ENCODE measurements at regions of chr15 and their contacts with region 1.

Region 1: GRCh38 chr15:75453703-75454470 is 2.4 kb upstream of the SIN3A start:
- DNase-seq: peak; percentile 100
- H3K4me3 Mint-ChIP-seq: peak overlapping the region; percentile 89
- H3K27ac Mint-ChIP-seq: peak overlapping the region; percentile 85
- H3K4me1 Mint-ChIP-seq: peaks cover 22% of the 10 kb centered on the region
- H3K27me3 Mint-ChIP-seq: no peaks in the 10 kb centered on the region
- CTCF ChIP-seq: no peak

Region 2: GRCh38 chr15:74842581-74843444 is 611.1 kb before region 1 on chr15 and contains the start of gene ULK3:
- CTCF ChIA-PET with region 1: no interaction called
- POLR2A ChIA-PET with region 1: no interaction called
- intact Hi-C with region 1: no loop called
- DNase-seq: peak; percentile 89
- H3K4me3 Mint-ChIP-seq: peak within 1 kb of the TSS; percentile 83
- H3K27ac Mint-ChIP-seq: peak within 1 kb of the TSS; percentile 49
- H3K4me1 Mint-ChIP-seq: no peaks in the 10 kb centered on the region
- H3K27me3 Mint-ChIP-seq: no peaks in the 10 kb centered on the region
- CTCF ChIP-seq: peak; percentile 76
- total RNA-seq, gene ULK3: 27.6 and 31.3 TPM in 2 replicates

Region 3: GRCh38 chr15:75468913-75469598 is 15.2 kb after region 1 on chr15:
- CTCF ChIA-PET with region 1: no interaction called
- POLR2A ChIA-PET with region 1: interaction called, 34 read pairs
- intact Hi-C with region 1: no loop called
- DNase-seq: peak; percentile 3
- H3K4me3 Mint-ChIP-seq: no peak overlapping the region
- H3K27ac Mint-ChIP-seq: no peak overlapping the region
- H3K4me1 Mint-ChIP-seq: peaks cover 6% of the 10 kb centered on the region
- H3K27me3 Mint-ChIP-seq: no peaks in the 10 kb centered on the region
- CTCF ChIP-seq: no peak

Region 4: GRCh38 chr15:75578948-75579920 is 125.3 kb after region 1 on chr15 and contains the start of gene PTPN9:
- CTCF ChIA-PET with region 1: interaction called, 4 read pairs
- POLR2A ChIA-PET with region 1: interaction called, 92 read pairs
- intact Hi-C with region 1: loop called (anchors 5 kb)
- DNase-seq: peak; percentile 74
- H3K4me3 Mint-ChIP-seq: peak within 1 kb of the TSS; percentile 95
- H3K27ac Mint-ChIP-seq: peak within 1 kb of the TSS; percentile 97
- H3K4me1 Mint-ChIP-seq: peaks cover 9% of the 10 kb centered on the region
- H3K27me3 Mint-ChIP-seq: no peaks in the 10 kb centered on the region
- CTCF ChIP-seq: peak; percentile 54
- total RNA-seq, gene PTPN9: 31.6 and 33.0 TPM in 2 replicates

Region 5: GRCh38 chr15:75647370-75648155 is 193.7 kb after region 1 on chr15 and contains the start of gene SNX33:
- CTCF ChIA-PET with region 1: interaction called, 3 read pairs
- POLR2A ChIA-PET with region 1: interaction called, 79 read pairs
- intact Hi-C with region 1: no loop called
- DNase-seq: peak; percentile 77
- H3K4me3 Mint-ChIP-seq: peak within 1 kb of the TSS; percentile 87
- H3K27ac Mint-ChIP-seq: peak within 1 kb of the TSS; percentile 78
- H3K4me1 Mint-ChIP-seq: peaks cover 47% of the 10 kb centered on the region
- H3K27me3 Mint-ChIP-seq: no peaks in the 10 kb centered on the region
- CTCF ChIP-seq: peak; percentile 48
- total RNA-seq, gene SNX33: 14.3 and 15.2 TPM in 2 replicates

Region 6: DNA sequence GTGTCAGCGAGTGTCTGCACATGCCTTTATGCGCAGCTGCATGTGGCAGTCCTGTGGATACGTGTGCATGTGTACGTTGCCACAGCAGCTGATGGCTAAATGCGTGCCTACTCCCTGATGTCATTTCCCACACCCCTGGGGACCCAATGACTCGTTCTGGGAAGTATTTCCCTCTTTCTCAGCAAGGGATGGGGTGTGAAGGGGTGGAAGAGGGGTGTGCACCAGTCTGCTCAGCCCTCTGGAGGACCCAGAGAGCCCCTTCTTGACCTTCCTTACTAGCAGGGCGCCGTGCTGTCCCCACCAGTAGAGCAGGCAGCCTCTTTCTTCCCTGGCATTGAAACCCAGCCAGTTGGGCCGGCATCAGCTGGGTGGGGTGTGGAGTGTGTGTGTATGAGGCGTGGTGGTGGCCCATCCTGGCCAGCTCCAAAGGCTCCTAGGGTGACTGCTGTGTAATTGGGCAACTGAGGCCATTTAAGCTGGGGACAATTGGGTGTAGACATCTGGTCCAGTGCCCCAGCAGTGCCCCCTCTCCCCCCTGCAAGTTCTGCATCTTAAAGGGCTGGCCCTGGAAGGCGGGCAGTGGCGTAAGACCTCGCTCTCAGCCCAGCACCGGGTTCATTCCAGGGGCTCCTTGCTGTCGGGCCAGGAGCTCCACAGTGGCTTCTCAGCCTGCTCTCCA is 213.1 kb after region 1 on chr15:
- CTCF ChIA-PET with region 1: interaction called, 5 read pairs
- POLR2A ChIA-PET with region 1: interaction called, 96 read pairs
- intact Hi-C with region 1: no loop called
- DNase-seq: peak; percentile 93
- H3K4me3 Mint-ChIP-seq: peak overlapping the region; percentile 65
- H3K27ac Mint-ChIP-seq: peak overlapping the region; percentile 100
- H3K4me1 Mint-ChIP-seq: peaks cover 57% of the 10 kb centered on the region
- H3K27me3 Mint-ChIP-seq: no peaks in the 10 kb centered on the region
- CTCF ChIP-seq: no peak

Measured in MCF 10A (cell line).